ENCODE measurements at regions of chr19 and their contacts with region 1.

Region 1: GRCh38 chr19:49473868-49474544 is at the start of gene FLT3LG:
- DNase-seq: peak; percentile 99
- H3K4me3 Mint-ChIP-seq: peak within 1 kb of the TSS; percentile 89
- H3K27ac Mint-ChIP-seq: peak within 1 kb of the TSS; percentile 90
- H3K4me1 Mint-ChIP-seq: peaks cover 61% of the 10 kb centered on the region
- H3K27me3 Mint-ChIP-seq: peaks cover 6% of the 10 kb centered on the region

Region 2: GRCh38 chr19:49363268-49364082 is 110.5 kb before region 1 on chr19 and contains the start of gene DKKL1:
- CTCF ChIA-PET with region 1: no interaction called
- DNase-seq: peak; percentile 85
- H3K4me3 Mint-ChIP-seq: no peak within 1 kb of the TSS
- H3K27ac Mint-ChIP-seq: no peak within 1 kb of the TSS
- H3K4me1 Mint-ChIP-seq: peaks cover 10% of the 10 kb centered on the region
- H3K27me3 Mint-ChIP-seq: peaks cover 11% of the 10 kb centered on the region

Region 3: GRCh38 chr19:49451430-49452181 is 22.4 kb before region 1 on chr19 and contains the start of gene PIH1D1:
- CTCF ChIA-PET with region 1: interaction called, 33 read pairs
- DNase-seq: peak; percentile 98
- H3K4me3 Mint-ChIP-seq: peak within 1 kb of the TSS; percentile 97
- H3K27ac Mint-ChIP-seq: peak within 1 kb of the TSS; percentile 99
- H3K4me1 Mint-ChIP-seq: peaks cover 76% of the 10 kb centered on the region
- H3K27me3 Mint-ChIP-seq: no peaks in the 10 kb centered on the region

Region 4: GRCh38 chr19:49486232-49486631 is 12.2 kb after region 1 on chr19:
- CTCF ChIA-PET with region 1: interaction called, 13 read pairs
- DNase-seq: no peak
- H3K4me3 Mint-ChIP-seq: no peak overlapping the region
- H3K27ac Mint-ChIP-seq: peak overlapping the region; percentile 78
- H3K4me1 Mint-ChIP-seq: peaks cover 55% of the 10 kb centered on the region
- H3K27me3 Mint-ChIP-seq: peaks cover 8% of the 10 kb centered on the region

Region 5: GRCh38 chr19:50003810-50004419 is 529.9 kb after region 1 on chr19:
- CTCF ChIA-PET with region 1: no interaction called
- DNase-seq: peak; percentile 38
- H3K4me3 Mint-ChIP-seq: no peak overlapping the region
- H3K27ac Mint-ChIP-seq: peak overlapping the region; percentile 75
- H3K4me1 Mint-ChIP-seq: peaks cover 26% of the 10 kb centered on the region
- H3K27me3 Mint-ChIP-seq: no peaks in the 10 kb centered on the region

Measured in activated naive CD4-positive, alpha-beta T cell treated with anti-CD3 and anti-CD28 coated beads, Interleukin-2, amount 10 ng/mL, durations not matched to agents 7 days and 5 days (primary cell).